BJ (cell line): ENCODE measurements at regions of chr16 and their contacts with region 1.

Region 1: DNA sequence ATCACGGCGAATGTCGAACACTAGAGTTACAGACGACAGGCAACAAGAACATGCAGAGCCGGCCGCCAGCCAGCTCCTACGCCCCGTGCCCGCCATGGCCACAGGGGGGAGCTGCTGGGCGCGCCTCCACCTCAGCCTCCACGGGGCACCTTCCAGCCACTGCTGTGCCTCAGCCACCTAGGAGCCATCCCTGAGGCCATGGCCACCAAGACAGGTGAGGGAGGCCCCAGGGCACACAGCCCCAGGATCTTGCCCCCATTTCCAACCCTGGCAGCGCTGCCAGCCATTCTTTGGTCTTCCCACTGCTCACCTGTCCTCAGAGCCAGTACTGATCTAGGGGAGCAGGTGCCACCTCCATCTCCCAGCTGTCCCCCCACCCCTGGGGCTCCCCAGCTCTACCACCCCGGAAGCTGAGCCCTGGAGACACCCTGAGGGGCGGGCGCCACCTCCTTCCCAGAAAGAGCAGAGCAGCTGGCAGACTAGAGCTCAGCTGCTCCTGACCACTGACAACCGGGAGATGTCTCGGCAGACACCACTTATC is 11.8 kb downstream of the GNPTG start:
- DNase-seq: no peak
- H3K4me3 ChIP-seq: no peak overlapping the region
- H3K27me3 ChIP-seq: no peaks in the 10 kb centered on the region
- CTCF ChIP-seq: peak; percentile 89

Region 2: DNA sequence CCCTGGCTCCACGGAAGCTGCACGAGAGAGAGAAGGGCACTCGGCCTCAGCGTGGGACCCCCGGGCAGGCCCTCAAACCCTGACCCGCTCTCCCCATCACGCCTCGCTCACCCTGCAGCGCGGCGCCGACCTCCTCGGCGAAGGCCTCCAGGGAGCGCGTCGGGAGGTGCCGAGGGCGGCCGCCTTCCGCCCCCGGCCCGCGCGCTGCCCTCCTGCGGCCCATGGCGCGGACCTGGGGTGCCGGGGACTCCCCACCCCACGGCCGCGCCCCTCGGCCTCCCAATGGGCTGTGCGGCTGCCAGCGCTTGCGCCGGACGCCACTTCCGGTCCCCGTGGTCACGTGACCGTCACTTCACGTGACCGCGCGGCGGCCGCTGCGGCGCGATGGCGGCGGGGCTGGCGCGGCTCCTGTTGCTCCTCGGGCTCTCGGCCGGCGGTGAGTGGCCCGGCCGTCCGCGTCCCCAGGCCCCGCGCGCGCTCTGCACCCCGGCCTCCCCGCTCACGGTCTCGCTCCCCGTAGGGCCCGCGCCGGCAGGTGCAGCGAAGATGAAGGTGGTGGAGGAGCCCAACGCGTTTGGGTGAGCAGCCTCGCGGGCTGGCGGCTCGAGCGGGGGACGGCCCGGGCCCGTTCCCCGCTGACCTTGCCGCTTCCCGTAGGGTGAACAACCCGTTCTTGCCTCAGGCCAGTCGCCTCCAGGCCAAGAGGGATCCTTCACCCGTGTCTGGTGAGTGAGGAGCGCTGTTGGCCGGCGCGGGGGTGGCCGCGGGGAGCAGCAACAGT is 11.8 kb before region 1 on chr16 and contains the starts of genes GNPTG and TSR3:
- CTCF ChIA-PET with region 1: interaction called, 10 read pairs
- POLR2A ChIA-PET with region 1: no interaction called
- DNase-seq: peak; percentile 10
- H3K4me3 ChIP-seq: peak within 1 kb of the TSS; percentile 71
- H3K27me3 ChIP-seq: no peaks in the 10 kb centered on the region
- CTCF ChIP-seq: no peak
- polyA plus RNA-seq, gene GNPTG: 74.1 and 113 TPM in 2 replicates
- polyA plus RNA-seq, gene TSR3: 43.1 and 52.3 TPM in 2 replicates

Region 3: DNA sequence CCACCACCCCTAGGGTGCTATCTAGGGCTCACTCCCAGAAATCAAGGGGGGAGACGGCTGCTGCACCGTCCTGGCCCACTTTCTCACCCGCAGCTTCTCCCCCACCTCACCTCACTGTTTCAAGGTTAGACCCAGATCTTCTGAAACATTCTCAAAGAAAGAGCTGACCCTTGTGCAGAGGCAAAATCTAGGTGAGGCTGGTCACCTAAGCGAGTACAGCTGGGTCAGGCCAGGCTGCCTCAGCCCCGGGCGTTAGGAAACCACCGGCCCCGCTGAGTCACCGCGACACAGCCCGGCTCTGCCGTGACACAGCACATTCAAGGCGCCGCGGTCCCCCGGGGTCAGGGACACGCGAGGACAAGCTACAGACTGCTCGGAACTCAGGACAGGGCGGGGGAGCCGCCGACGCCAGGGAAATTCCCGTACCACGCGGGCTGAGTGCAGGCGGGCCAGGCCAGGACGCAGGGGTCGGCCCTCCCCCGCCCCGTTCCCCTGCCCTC is 15.3 kb after region 1 on chr16:
- CTCF ChIA-PET with region 1: interaction called, 20 read pairs
- POLR2A ChIA-PET with region 1: no interaction called
- DNase-seq: peak; percentile 31
- H3K4me3 ChIP-seq: peak overlapping the region; percentile 49
- H3K27me3 ChIP-seq: no peaks in the 10 kb centered on the region
- CTCF ChIP-seq: no peak

Region 4: GRCh38 chr16:1533443-1533951 is 169.9 kb after region 1 on chr16 and contains the start of gene TMEM204:
- CTCF ChIA-PET with region 1: no interaction called
- POLR2A ChIA-PET with region 1: interaction called, 29 read pairs
- DNase-seq: peak; percentile 50
- H3K4me3 ChIP-seq: peak within 1 kb of the TSS; percentile 81
- H3K27me3 ChIP-seq: no peaks in the 10 kb centered on the region
- CTCF ChIP-seq: no peak
- polyA plus RNA-seq, gene TMEM204: 42.4 and 81.9 TPM in 2 replicates